ENCODE measurements at regions of chr1 and their contacts with region 1.

Region 1: GRCh38 chr1:211326528-211327345 is at the start of gene TRAF5:
- DNase-seq: peak in 1 of 2 donors; percentile 72
- H3K4me3 ChIP-seq: peak within 1 kb of the TSS; percentile 91 to 93
- H3K27ac ChIP-seq: peak within 1 kb of the TSS; percentile 84 to 98
- H3K4me1 ChIP-seq: peaks cover 15 to 31% of the 10 kb centered on the region in 2 donors
- H3K27me3 ChIP-seq: no peaks in the 10 kb centered on the region
- CTCF ChIP-seq: no peak
- total RNA-seq, gene TRAF5: 3.9 TPM

Region 2: GRCh38 chr1:211236633-211237320 is 90.0 kb before region 1 on chr1:
- intact Hi-C with region 1: no loop called
- DNase-seq: no peak
- H3K4me3 ChIP-seq: no peak overlapping the region
- H3K27ac ChIP-seq: no peak overlapping the region
- H3K4me1 ChIP-seq: no peaks in the 10 kb centered on the region
- H3K27me3 ChIP-seq: no peaks in the 10 kb centered on the region
- CTCF ChIP-seq: no peak

Region 3: DNA sequence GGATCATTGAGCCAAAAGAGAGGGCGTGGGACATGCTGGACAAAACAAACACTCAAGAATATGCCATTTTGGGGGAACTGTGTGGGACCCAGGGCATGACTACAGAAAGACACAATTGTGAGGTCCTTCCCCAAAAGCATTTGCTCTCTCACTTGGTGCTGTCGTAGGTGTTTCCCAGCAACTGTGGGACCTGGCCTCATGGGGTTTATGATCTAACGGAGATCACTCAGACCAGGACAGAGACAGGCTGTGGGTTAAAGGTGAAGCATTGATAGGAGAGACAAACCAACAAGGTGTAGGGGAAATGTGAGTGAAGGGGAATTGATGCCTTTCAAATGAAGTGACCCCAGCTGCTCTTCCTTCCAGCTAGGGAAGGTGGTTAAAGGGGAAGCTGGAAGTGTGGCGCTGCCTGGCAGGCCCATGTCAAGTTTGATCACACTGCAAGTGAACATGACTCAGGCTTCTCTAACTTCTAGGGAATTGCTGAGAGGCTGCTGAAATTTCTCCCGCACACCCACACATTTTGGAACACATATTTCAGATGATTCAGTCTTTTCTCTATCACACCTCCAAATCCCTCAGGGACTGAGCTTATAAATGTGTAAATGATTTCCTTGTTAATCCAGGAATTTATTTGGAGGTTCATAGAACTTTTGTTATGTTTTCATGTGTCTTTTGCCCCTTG is 30.1 kb after region 1 on chr1:
- intact Hi-C with region 1: loop called (anchors 2 kb)
- DNase-seq: no peak
- H3K4me3 ChIP-seq: no peak overlapping the region
- H3K27ac ChIP-seq: peak overlapping the region; percentile 41 to 56
- H3K4me1 ChIP-seq: peaks cover 0 to 17% of the 10 kb centered on the region in 2 donors
- H3K27me3 ChIP-seq: no peaks in the 10 kb centered on the region
- CTCF ChIP-seq: no peak

Region 4: DNA sequence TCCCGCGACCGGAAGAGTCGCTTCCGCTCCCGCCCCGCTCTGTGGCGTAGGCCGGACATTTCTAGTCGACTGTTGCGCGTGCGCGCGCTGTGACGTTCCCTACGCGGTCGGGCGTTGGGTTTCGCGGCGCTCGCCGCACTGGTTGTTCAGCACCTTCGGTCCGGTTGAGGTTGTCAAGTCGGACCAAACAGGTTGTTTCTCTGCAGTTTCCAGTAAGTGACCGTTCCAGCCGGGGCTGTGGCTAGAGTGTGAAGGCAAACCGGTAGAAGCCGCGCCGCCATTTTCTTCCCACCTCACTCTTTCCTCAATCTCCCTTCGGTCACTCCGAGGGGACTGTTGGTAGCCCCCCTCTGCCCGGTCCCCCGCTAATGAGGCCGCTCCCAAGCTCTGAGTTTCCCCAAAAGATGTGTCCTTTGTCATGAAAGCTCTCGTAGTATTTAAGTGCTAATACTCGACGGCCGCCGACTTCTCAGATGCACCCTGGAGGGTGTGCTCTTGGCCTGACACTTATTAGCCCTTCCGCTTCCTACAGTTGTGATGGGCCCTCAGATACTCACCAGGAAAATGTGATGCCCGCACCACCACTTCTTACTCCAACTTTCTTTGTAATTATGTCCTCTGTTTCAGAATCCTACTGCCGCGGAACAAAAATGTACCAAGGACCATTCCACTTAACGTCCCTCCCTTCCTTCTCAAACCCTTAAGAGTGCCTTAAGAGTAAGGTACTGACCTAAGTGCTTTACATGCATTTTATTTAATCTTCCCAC is 56.2 kb after region 1 on chr1:
- intact Hi-C with region 1: loop called (anchors 2 kb)
- DNase-seq: peak; percentile 59 to 96
- H3K4me3 ChIP-seq: peak overlapping the region; percentile 71 to 96
- H3K27ac ChIP-seq: peak overlapping the region; percentile 93 to 100
- H3K4me1 ChIP-seq: no peaks in the 10 kb centered on the region
- H3K27me3 ChIP-seq: no peaks in the 10 kb centered on the region
- CTCF ChIP-seq: peak in 1 of 3 experiments; percentile 3

Region 5: GRCh38 chr1:211469938-211470529 is 143.3 kb after region 1 on chr1:
- intact Hi-C with region 1: loop called (anchors 2 kb)
- DNase-seq: peak; percentile 15 to 87
- H3K4me3 ChIP-seq: no peak overlapping the region
- H3K27ac ChIP-seq: no peak overlapping the region
- H3K4me1 ChIP-seq: peaks cover 0 to 5% of the 10 kb centered on the region in 2 donors
- H3K27me3 ChIP-seq: no peaks in the 10 kb centered on the region
- CTCF ChIP-seq: peak; percentile 63 to 88 (median 82)

Region 6: DNA sequence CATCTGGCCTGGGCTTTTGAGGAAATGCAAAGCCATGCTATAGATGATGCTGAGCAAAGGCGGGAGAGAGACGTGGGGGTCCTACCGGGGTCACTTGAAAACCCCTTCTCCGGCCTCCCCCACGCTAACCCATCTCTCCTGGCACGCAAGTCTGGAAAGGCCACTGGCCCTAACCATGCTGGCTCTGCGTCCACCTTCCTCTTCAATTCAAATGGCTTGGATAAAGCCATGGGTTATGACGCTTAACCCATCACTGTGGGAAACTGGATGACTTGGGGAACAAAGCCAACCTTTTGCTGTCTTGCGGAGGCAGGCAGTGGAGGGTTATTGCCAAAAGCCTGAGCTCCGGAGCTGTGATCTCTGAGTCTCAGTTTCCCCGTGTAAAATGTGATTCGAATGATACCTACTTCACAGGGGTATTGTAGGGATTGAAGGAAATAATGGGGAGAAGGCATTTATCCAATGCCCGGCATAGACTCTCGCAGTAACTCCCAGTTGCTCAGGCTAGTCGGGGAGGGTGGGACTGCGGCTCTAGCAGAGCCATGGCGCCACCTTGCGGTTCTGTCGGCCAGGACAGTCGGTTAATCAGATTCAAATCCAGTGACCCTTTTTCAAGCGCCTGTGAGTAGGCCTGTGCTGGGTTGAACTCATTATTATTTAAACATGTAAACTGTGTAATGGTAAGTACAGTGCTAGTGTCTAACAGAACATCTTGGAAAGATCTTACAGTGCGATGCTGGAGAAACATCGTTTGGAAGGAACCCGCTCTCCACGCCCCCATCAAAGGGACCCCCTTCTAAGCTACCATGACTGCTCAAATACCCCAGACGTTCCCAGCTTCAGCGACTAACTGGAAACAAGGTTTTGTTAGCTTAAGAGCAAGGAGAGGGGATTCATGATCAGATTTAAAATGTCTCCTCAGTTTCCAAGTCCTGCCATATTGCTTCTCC is 328.4 kb after region 1 on chr1:
- intact Hi-C with region 1: loop called (anchors 2 kb)
- DNase-seq: peak in 1 of 2 donors; percentile 94
- H3K4me3 ChIP-seq: peak overlapping the region in 1 of 2 donors; percentile 24
- H3K27ac ChIP-seq: no peak overlapping the region
- H3K4me1 ChIP-seq: no peaks in the 10 kb centered on the region
- H3K27me3 ChIP-seq: no peaks in the 10 kb centered on the region
- CTCF ChIP-seq: peak; percentile 85 to 89 (median 87)